CD4-positive, alpha-beta T cell (primary cell): ENCODE measurements at regions of chr11 and their contacts with region 1.

Region 1: DNA sequence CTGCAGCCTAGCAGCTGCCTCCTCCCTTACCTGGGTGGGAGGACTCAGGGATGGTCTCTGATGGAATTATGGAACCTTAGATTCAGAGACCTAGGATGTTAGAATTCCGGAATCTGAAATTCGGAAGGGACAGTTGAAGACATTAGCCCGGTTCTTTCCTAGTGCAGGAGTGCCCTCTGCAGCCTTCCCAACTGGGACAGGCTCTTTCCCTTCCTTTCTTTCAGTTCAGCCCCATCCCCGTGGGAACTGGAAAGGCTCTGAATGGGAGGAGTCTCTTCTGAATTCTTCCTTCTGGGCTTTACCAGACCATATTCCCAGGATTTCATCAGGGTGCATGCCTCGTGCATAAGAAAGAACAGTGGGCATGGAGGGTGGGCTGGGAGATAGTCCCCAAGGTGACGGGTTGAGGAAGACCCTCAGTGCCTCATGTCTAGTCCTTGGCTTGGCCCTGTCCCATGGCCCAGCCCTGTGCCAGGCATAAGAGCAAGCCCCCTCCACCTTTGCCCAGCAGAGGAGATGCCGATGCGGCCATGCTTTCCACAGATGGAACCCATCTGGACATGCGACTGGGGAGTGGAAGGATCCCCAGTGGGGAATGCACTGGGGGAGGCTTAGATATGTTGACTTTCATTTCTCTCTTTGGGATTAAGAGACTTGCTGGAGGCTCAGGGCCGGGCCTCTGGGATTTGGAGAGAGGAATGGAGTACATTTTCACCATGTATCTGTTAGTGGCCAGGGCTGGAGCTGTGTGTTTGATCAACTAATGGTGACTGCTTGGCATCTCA is 14.4 kb downstream of the DNAJB13 start:
- DNase-seq: peak in 1 of 14 experiments; percentile 35
- ATAC-seq: no peak
- H3K4me3 ChIP-seq: no peak overlapping the region
- H3K4me3 Mint-ChIP-seq: no peak overlapping the region
- H3K27ac ChIP-seq: no peak overlapping the region
- H3K27ac Mint-ChIP-seq: peak overlapping the region; percentile 73
- H3K4me1 ChIP-seq: peaks cover 63% of the 10 kb centered on the region
- H3K4me1 Mint-ChIP-seq: peaks cover 52% of the 10 kb centered on the region
- H3K27me3 ChIP-seq: no peaks in the 10 kb centered on the region
- H3K27me3 Mint-ChIP-seq: no peaks in the 10 kb centered on the region
- CTCF ChIP-seq: no peak

Region 2: DNA sequence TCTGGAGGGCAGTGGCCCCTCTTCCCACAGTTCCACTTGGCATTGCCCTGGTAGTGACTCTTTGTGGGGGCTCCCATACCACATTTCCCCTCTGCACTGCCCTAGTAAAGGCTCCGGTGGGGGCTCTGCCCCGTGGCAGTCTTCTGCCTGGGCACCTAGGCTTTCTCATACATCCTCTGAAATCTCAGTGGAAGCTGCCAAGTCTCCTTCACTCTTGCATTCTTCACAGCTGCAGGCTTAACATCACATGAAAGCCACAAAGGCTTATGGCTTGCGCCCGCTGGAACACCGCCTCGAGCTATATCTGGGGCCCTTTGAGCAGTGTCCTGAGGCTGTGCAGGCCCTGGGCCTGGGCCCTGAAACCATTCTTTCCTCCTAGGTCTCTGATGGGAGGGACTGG is 293.6 kb before region 1 on chr11:
- CTCF ChIA-PET with region 1: no interaction called
- POLR2A ChIA-PET with region 1: no interaction called
- intact Hi-C with region 1: no loop called
- DNase-seq: no peak
- ATAC-seq: no peak
- H3K4me3 ChIP-seq: no peak overlapping the region
- H3K4me3 Mint-ChIP-seq: no peak overlapping the region
- H3K27ac ChIP-seq: no peak overlapping the region
- H3K27ac Mint-ChIP-seq: no peak overlapping the region
- H3K4me1 ChIP-seq: no peaks in the 10 kb centered on the region
- H3K4me1 Mint-ChIP-seq: no peaks in the 10 kb centered on the region
- H3K27me3 ChIP-seq: no peaks in the 10 kb centered on the region
- H3K27me3 Mint-ChIP-seq: no peaks in the 10 kb centered on the region
- CTCF ChIP-seq: no peak

Region 3: GRCh38 chr11:73894725-73895335 is 70.4 kb before region 1 on chr11:
- CTCF ChIA-PET with region 1: no interaction called
- POLR2A ChIA-PET with region 1: no interaction called
- intact Hi-C with region 1: no loop called
- DNase-seq: no peak
- ATAC-seq: no peak
- H3K4me3 ChIP-seq: no peak overlapping the region
- H3K4me3 Mint-ChIP-seq: no peak overlapping the region
- H3K27ac ChIP-seq: no peak overlapping the region
- H3K27ac Mint-ChIP-seq: no peak overlapping the region
- H3K4me1 ChIP-seq: no peaks in the 10 kb centered on the region
- H3K4me1 Mint-ChIP-seq: no peaks in the 10 kb centered on the region
- H3K27me3 ChIP-seq: no peaks in the 10 kb centered on the region
- H3K27me3 Mint-ChIP-seq: no peaks in the 10 kb centered on the region
- CTCF ChIP-seq: no peak

Region 4: GRCh38 chr11:73982969-73983740 is 17.9 kb after region 1 on chr11:
- CTCF ChIA-PET with region 1: interaction called, 14 read pairs
- POLR2A ChIA-PET with region 1: interaction called, 366 read pairs
- intact Hi-C with region 1: loop called (anchors 2 kb)
- DNase-seq: peak; percentile 86 to 97 (median 90)
- ATAC-seq: peak; percentile 73
- H3K4me3 ChIP-seq: peak overlapping the region; percentile 87
- H3K4me3 Mint-ChIP-seq: peak overlapping the region; percentile 100
- H3K27ac ChIP-seq: peak overlapping the region; percentile 81 to 96
- H3K27ac Mint-ChIP-seq: peak overlapping the region; percentile 98
- H3K4me1 ChIP-seq: peaks cover 50% of the 10 kb centered on the region
- H3K4me1 Mint-ChIP-seq: peaks cover 57% of the 10 kb centered on the region
- H3K27me3 ChIP-seq: no peaks in the 10 kb centered on the region
- H3K27me3 Mint-ChIP-seq: no peaks in the 10 kb centered on the region
- CTCF ChIP-seq: no peak

Region 5: DNA sequence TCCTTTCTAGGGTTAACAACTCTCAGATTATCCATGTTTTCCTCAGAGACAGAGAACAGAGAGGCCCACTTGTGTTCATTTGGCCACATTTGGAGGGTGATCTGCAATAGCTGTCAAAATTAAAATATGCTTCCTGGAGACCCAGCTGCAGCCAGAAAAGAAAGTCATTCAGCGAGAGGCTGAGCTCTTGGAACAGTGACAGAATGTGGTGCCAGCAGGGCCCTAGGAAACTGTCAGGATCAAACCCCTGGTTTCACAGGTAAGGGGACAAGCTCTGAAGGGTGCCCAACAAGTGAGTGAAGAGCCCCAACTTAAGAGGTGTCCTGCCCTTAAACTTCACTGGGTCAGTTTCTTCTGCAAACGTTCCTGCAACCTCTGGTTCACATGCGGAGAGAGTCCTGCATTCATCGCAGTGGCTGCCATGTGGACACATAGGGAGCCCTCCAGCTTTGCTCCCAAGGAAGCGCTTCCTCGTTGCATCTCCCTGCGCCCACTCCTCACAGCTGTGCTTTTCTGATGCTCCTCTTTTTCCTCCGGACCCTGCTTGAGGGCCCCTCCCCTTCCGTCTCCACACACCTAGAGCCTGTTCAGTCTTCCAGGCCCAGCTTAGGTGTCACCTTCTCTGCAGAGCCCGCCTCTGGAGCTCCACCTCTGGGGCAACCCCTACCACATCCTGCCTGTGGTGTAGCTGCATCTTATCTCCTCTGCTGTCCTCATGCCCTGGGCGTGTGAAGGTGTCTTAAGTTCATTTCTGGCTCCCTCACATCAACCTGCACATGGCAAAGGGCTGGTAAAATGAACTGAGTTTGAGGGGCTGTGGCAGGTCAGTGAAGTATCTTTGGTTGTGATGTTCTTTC is 39.7 kb after region 1 on chr11:
- CTCF ChIA-PET with region 1: interaction called, 8 read pairs
- POLR2A ChIA-PET with region 1: interaction called, 316 read pairs
- intact Hi-C with region 1: loop called (anchors 1 kb)
- DNase-seq: peak; percentile 77 to 96 (median 84)
- ATAC-seq: peak; percentile 100
- H3K4me3 ChIP-seq: peak overlapping the region; percentile 39
- H3K4me3 Mint-ChIP-seq: peak overlapping the region; percentile 81
- H3K27ac ChIP-seq: peak overlapping the region; percentile 64 to 70
- H3K27ac Mint-ChIP-seq: peak overlapping the region; percentile 94
- H3K4me1 ChIP-seq: peaks cover 75% of the 10 kb centered on the region
- H3K4me1 Mint-ChIP-seq: peaks cover 73% of the 10 kb centered on the region
- H3K27me3 ChIP-seq: no peaks in the 10 kb centered on the region
- H3K27me3 Mint-ChIP-seq: no peaks in the 10 kb centered on the region
- CTCF ChIP-seq: peak; percentile 45

Region 6: DNA sequence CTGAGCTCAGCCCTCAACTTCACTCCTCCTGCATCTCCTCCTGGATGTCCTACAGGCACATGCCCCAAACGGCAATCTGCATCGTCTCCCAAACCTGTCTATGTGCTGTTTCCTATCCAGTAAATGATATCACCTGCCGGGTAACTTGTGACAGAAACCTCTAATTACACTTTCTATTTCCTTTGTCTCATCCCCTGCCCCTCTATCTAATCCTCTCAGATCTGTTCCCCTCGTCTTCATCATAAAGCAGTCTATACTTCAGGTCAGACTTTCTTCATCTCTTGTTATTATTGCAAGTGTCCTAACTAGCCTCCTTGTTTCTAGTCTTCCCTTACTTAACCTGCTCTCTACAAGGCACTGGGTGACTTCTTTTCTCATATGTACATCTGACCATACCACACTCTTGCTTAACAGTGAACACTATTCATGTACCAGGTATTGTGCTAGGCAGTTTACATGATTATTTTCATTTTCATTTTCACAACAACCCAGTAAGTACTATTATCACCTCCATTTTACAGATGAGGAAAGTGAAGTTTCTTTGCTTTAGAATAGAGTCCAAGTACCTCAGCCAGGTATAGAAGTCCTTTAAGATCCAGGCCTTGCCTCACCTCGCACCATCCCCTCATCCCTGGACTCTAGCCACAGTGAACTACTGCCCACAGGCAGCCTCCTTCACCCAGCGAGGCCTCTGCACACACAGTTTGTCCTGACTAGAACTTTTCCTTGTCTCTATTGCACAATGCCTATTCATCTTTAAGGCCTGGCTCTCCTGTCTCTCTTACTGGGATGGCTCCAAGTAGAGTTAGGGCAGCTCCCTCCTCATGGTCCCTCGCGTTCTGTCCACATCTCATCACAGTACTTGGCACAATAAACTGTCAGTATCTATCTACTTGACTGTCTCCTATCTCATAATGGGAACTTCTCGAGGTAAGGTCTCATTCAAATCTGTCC is 65.7 kb after region 1 on chr11:
- CTCF ChIA-PET with region 1: interaction called, 4 read pairs
- POLR2A ChIA-PET with region 1: interaction called, 4 read pairs
- intact Hi-C with region 1: loop called (anchors 1 kb)
- DNase-seq: peak in 1 of 14 experiments; percentile 41
- ATAC-seq: no peak
- H3K4me3 ChIP-seq: peak overlapping the region; percentile 2
- H3K4me3 Mint-ChIP-seq: peak overlapping the region; percentile 40
- H3K27ac ChIP-seq: peak overlapping the region in 1 of 2 donors; percentile 6
- H3K27ac Mint-ChIP-seq: peak overlapping the region; percentile 70
- H3K4me1 ChIP-seq: peaks cover 25% of the 10 kb centered on the region
- H3K4me1 Mint-ChIP-seq: peaks cover 21% of the 10 kb centered on the region
- H3K27me3 ChIP-seq: no peaks in the 10 kb centered on the region
- H3K27me3 Mint-ChIP-seq: no peaks in the 10 kb centered on the region
- CTCF ChIP-seq: no peak

Region 7: GRCh38 chr11:74278721-74279161 is 313.5 kb after region 1 on chr11:
- CTCF ChIA-PET with region 1: no interaction called
- POLR2A ChIA-PET with region 1: no interaction called
- intact Hi-C with region 1: no loop called
- DNase-seq: no peak
- ATAC-seq: no peak
- H3K4me3 ChIP-seq: no peak overlapping the region
- H3K4me3 Mint-ChIP-seq: no peak overlapping the region
- H3K27ac ChIP-seq: no peak overlapping the region
- H3K27ac Mint-ChIP-seq: no peak overlapping the region
- H3K4me1 ChIP-seq: no peaks in the 10 kb centered on the region
- H3K4me1 Mint-ChIP-seq: no peaks in the 10 kb centered on the region
- H3K27me3 ChIP-seq: no peaks in the 10 kb centered on the region
- H3K27me3 Mint-ChIP-seq: no peaks in the 10 kb centered on the region
- CTCF ChIP-seq: no peak

Region 8: GRCh38 chr11:74321487-74322188 is 356.4 kb after region 1 on chr11:
- CTCF ChIA-PET with region 1: no interaction called
- POLR2A ChIA-PET with region 1: no interaction called
- intact Hi-C with region 1: loop called in 1 of 2 experiments (anchors 10 kb)
- DNase-seq: peak in 5 of 14 experiments; percentile 12 to 63 (median 26)
- ATAC-seq: peak; percentile 58
- H3K4me3 ChIP-seq: no peak overlapping the region
- H3K4me3 Mint-ChIP-seq: no peak overlapping the region
- H3K27ac ChIP-seq: no peak overlapping the region
- H3K27ac Mint-ChIP-seq: no peak overlapping the region
- H3K4me1 ChIP-seq: no peaks in the 10 kb centered on the region
- H3K4me1 Mint-ChIP-seq: no peaks in the 10 kb centered on the region
- H3K27me3 ChIP-seq: peaks cover 0 to 11% of the 10 kb centered on the region in 2 experiments
- H3K27me3 Mint-ChIP-seq: peaks cover 4% of the 10 kb centered on the region
- CTCF ChIP-seq: peak; percentile 56